CD8-positive, alpha-beta T cell (primary cell): ENCODE measurements at regions of chr4 and their contacts with region 1.

Region 1: DNA sequence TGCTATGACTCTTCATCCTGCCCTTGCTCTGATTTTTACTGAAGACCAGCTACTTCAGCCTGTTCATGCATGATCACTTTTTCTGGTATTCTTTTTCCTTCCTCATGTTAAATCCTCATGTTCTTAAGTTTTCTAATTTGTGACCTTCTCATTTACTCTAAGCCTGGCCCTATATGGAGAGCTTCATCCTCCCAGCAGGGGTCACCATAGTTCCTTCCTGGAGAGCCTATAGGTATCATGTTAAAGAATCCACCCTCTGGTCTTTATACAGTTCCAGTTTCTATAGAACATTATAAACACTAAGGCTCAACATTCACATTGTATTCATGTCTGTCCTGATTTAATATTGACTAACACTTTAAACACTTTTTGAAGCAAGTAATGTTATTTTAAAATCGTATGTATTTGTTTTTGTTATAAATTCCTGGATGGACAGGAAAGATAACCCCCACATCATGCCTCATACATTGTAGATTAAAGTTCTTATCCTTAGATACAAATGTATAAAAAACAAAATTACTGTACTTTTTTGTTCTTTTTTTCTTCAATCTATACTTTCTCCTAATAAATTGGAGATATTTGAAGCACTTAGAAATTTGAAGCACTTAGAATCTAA is 53.8 kb upstream of the OTUD4 start:
- DNase-seq: peak; percentile 4 to 75 (median 48)
- ATAC-seq: peak; percentile 83
- H3K4me3 ChIP-seq: no peak overlapping the region
- H3K4me3 Mint-ChIP-seq: no peak overlapping the region
- H3K27ac ChIP-seq: no peak overlapping the region
- H3K27ac Mint-ChIP-seq: no peak overlapping the region
- H3K4me1 ChIP-seq: no peaks in the 10 kb centered on the region
- H3K4me1 Mint-ChIP-seq: no peaks in the 10 kb centered on the region
- H3K27me3 ChIP-seq: no peaks in the 10 kb centered on the region
- H3K27me3 Mint-ChIP-seq: peaks cover 2% of the 10 kb centered on the region
- CTCF ChIP-seq: peak; percentile 66

Region 2: DNA sequence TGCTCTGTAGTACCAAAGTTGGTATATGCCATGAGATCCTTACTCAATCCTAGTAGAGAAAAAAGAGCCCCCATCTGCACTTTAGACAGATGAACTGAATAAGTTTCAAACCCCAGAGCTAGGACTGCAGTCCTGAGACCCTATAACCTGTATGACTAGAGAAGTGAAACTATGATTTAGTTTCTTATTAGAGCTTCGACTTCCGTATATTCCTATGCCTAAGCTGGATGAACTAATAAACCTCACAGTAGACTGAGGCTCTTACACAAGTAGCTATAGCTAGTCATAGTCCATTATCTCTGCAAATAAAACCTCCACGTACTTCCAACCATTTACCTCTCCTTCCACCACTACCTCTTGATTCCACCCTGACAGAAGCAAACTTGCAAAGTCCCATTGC is 47.5 kb before region 1 on chr4:
- CTCF ChIA-PET with region 1: no interaction called
- POLR2A ChIA-PET with region 1: no interaction called
- intact Hi-C with region 1: no loop called
- DNase-seq: no peak
- ATAC-seq: no peak
- H3K4me3 ChIP-seq: no peak overlapping the region
- H3K4me3 Mint-ChIP-seq: no peak overlapping the region
- H3K27ac ChIP-seq: no peak overlapping the region
- H3K27ac Mint-ChIP-seq: no peak overlapping the region
- H3K4me1 ChIP-seq: no peaks in the 10 kb centered on the region
- H3K4me1 Mint-ChIP-seq: peaks cover 3% of the 10 kb centered on the region
- H3K27me3 ChIP-seq: no peaks in the 10 kb centered on the region
- H3K27me3 Mint-ChIP-seq: no peaks in the 10 kb centered on the region
- CTCF ChIP-seq: no peak

Region 3: DNA sequence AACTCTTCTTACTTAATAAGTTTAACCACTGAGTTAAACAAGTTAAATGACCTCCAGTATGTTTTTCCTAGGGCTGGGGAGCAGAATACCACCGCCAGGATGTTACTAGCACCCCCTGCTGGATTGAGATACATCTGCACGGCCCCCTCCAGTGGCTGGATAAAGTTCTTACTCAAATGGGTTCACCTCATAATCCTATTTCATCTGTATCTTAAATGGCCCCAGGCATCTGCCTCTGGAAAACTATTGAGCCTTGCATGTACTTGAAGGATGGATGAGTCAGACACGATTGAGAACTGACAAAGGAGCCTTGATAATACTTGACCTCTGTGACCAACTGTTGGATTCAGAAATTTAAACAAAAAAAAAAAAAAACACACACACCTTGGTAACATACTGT is 323.5 kb after region 1 on chr4:
- CTCF ChIA-PET with region 1: interaction called, 4 read pairs
- POLR2A ChIA-PET with region 1: no interaction called
- intact Hi-C with region 1: loop called (anchors 1 to 2 kb)
- DNase-seq: peak in 7 of 9 experiments; percentile 5 to 63 (median 38)
- ATAC-seq: peak; percentile 59
- H3K4me3 ChIP-seq: no peak overlapping the region
- H3K4me3 Mint-ChIP-seq: no peak overlapping the region
- H3K27ac ChIP-seq: no peak overlapping the region
- H3K27ac Mint-ChIP-seq: no peak overlapping the region
- H3K4me1 ChIP-seq: no peaks in the 10 kb centered on the region
- H3K4me1 Mint-ChIP-seq: no peaks in the 10 kb centered on the region
- H3K27me3 ChIP-seq: no peaks in the 10 kb centered on the region
- H3K27me3 Mint-ChIP-seq: peaks cover 5% of the 10 kb centered on the region
- CTCF ChIP-seq: peak; percentile 52

Region 4: DNA sequence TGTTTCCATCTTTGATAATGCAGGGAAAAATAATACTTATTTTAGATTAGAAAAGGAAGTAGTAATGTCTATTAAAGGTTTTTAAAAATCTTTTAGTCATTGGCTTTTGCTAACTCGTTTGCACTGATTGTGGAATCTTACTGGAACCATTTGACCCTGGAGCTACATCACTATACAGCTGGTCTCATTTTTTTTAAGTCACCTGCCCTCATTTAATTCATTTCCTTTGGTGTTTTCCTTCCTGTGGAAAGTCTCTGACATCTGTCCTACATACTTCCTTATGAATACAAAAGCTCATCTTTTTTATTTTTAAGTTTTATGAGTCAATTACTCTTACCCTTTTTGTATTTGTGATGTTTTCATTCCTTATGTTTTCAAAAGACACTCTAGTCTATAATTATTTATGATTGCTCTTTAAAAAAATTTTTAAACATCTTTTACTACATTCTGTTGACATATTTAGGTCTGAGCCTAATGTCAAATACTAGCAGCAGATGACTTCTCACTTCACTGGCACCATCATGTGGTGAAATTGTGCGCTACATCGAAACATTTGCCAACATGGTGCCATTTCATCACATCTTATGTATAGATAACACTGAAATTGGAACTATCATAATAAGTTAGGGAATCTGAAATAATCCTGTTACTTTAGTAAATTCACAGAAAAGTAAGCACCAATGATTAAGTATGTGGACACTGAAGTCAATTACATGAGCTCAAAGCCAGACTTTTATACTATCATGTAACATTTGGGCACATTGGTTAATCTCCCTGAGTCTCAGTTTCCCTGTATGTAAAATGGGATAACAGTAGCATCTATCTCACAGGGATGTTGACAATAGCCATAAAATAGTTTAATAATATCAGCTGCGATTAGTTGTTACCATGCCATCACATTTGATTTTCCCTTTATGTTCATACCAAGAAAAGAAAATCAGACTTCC is 375.6 kb after region 1 on chr4:
- CTCF ChIA-PET with region 1: interaction called, 25 read pairs
- POLR2A ChIA-PET with region 1: no interaction called
- intact Hi-C with region 1: loop called (anchors 1 to 2 kb)
- DNase-seq: peak; percentile 32 to 72 (median 53)
- ATAC-seq: peak; percentile 81
- H3K4me3 ChIP-seq: no peak overlapping the region
- H3K4me3 Mint-ChIP-seq: no peak overlapping the region
- H3K27ac ChIP-seq: no peak overlapping the region
- H3K27ac Mint-ChIP-seq: no peak overlapping the region
- H3K4me1 ChIP-seq: no peaks in the 10 kb centered on the region
- H3K4me1 Mint-ChIP-seq: no peaks in the 10 kb centered on the region
- H3K27me3 ChIP-seq: no peaks in the 10 kb centered on the region
- H3K27me3 Mint-ChIP-seq: peaks cover 9% of the 10 kb centered on the region
- CTCF ChIP-seq: peak; percentile 54

Region 5: GRCh38 chr4:145851511-145852201 is 617.5 kb after region 1 on chr4:
- CTCF ChIA-PET with region 1: no interaction called
- POLR2A ChIA-PET with region 1: no interaction called
- intact Hi-C with region 1: no loop called
- DNase-seq: no peak
- ATAC-seq: no peak
- H3K4me3 ChIP-seq: no peak overlapping the region
- H3K4me3 Mint-ChIP-seq: no peak overlapping the region
- H3K27ac ChIP-seq: no peak overlapping the region
- H3K27ac Mint-ChIP-seq: no peak overlapping the region
- H3K4me1 ChIP-seq: no peaks in the 10 kb centered on the region
- H3K4me1 Mint-ChIP-seq: peaks cover 15% of the 10 kb centered on the region
- H3K27me3 ChIP-seq: no peaks in the 10 kb centered on the region
- H3K27me3 Mint-ChIP-seq: no peaks in the 10 kb centered on the region
- CTCF ChIP-seq: no peak